Posterior cingulate gyrus (tissue), 11 donors: ENCODE measurements at regions of chr2 and their contacts with region 1.

Region 1: GRCh38 chr2:62195421-62196277 is at the start of gene B3GNT2:
- DNase-seq: peak; percentile 65 to 96 (median 79)

Region 2: GRCh38 chr2:61905372-61906185 is 290.1 kb before region 1 on chr2 and contains the start of gene COMMD1:
- intact Hi-C with region 1: loop called (anchors 10 kb)
- DNase-seq: peak; percentile 82 to 98 (median 88)

Region 3: DNA sequence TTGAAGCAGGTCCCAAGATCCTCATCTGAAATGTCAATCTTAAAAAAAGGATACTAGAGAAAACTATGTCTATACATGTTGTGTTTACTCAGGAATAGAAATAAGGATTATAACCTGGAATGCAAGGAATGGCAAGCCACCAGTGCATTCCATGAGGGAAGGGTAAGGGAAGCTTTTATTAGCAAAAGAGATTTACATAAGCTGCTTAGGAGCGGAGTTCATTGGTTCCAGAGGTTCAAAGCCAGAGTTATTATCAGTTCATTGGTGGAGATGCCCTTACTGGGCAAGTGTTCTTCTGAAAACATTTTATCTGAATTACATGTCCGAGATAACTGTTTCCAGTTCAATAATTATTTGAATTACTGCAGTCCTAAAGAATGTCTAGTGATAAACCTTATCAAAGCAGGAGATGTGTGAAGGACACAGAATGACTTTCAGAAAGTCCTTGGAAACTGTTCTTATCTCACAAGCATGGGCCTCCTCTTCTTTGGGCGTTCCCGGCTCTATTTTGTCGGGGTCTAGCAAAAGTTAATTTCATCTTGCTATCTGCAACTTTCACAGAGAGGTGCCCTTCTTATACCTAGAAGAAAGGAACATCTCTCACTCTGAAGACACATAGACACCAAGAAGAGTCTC is 266.7 kb before region 1 on chr2:
- intact Hi-C with region 1: no loop called
- DNase-seq: no peak

Region 4: GRCh38 chr2:62014102-62014501 is 181.5 kb before region 1 on chr2:
- intact Hi-C with region 1: loop called (anchors 5 kb)
- DNase-seq: peak; percentile 37 to 92 (median 68)

Region 5: GRCh38 chr2:62410015-62410453 is 214.4 kb after region 1 on chr2:
- intact Hi-C with region 1: loop called (anchors 5 kb)
- DNase-seq: peak in 7 of 10 donors; percentile 27 to 89 (median 52)